ENCODE measurements at regions of chr2 and their contacts with region 1.

Region 1: GRCh38 chr2:135005753-135006152 is 41.5 kb downstream of the MAP3K19 start:
- DNase-seq: no peak
- H3K4me3 ChIP-seq: no peak overlapping the region
- H3K27ac ChIP-seq: no peak overlapping the region
- H3K4me1 ChIP-seq: peaks cover 0 to 9% (median 0%) of the 10 kb centered on the region in 3 donors
- H3K27me3 ChIP-seq: peaks cover 0 to 35% (median 0%) of the 10 kb centered on the region in 4 donors
- CTCF ChIP-seq: no peak
- POLR2A ChIP-seq: no peak

Region 2: DNA sequence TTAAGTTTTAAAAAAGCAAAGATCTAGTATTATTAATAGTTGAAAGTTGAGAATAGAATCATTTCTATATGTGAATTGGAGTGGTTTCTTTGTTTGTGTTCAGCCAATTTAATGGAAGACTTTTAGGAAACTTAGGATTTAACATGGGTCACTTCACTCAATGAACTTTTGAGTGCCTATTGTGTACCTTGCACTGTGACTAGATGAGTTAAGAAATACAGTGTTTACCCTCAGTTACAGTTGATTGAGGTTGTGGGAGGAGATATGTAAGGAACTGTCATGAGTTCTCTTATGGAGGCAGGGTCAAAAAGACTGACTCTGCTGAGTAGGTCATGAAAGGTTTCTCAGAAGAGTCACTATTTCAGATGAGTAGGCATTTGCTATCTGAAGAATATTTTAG is 144.9 kb after region 1 on chr2:
- intact Hi-C with region 1: no loop called
- DNase-seq: no peak
- H3K4me3 ChIP-seq: no peak overlapping the region
- H3K27ac ChIP-seq: no peak overlapping the region
- H3K4me1 ChIP-seq: no peaks in the 10 kb centered on the region
- H3K27me3 ChIP-seq: no peaks in the 10 kb centered on the region
- CTCF ChIP-seq: no peak
- POLR2A ChIP-seq: no peak

Region 3: DNA sequence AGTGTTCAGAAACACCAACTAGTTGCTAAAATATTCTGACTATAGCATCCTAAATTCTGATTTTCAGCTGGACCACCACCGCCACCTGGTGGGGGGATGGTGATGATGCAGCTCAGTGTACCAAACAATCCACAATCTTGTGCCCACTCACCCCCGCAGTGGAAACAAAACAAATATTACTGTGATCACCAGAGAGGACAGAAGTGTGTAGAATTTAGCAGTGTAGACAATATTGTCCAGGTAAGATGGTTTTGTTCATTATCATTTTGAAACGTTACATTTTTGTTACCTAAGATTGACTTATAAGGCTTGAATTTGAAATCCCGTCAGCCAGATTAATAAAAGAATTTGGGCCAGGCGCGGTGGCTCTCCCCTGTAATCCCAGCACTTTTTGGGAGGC is 704.2 kb after region 1 on chr2:
- intact Hi-C with region 1: loop called (anchors 5 kb)
- DNase-seq: no peak
- H3K4me3 ChIP-seq: no peak overlapping the region
- H3K27ac ChIP-seq: no peak overlapping the region
- H3K4me1 ChIP-seq: peaks cover 0 to 3% (median 0%) of the 10 kb centered on the region in 3 donors
- H3K27me3 ChIP-seq: no peaks in the 10 kb centered on the region
- CTCF ChIP-seq: peak; percentile 85 to 96 (median 90)
- POLR2A ChIP-seq: no peak

Measured in esophagus squamous epithelium (tissue), 5 donors.